IMR-90 (cell line): ENCODE measurements at regions of chr12 and their contacts with region 1.

Region 1: DNA sequence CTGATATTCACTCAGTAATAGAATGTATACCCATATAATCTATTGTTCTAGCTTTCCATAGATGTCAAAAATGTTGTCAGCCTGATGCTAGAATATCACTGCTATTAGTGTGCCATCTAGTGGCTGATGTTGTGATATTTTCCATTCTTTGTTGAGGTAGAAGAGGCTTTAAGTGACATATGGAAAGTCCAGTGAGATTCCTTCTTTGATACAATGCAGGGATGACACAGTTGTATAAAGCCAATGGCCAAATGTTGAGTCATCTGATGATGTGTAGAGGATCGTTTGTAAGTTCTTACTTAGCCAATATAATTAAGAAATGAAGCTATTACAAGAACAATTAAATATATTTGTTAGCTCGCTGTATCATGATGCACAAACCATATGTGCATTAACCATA is 58.1 kb upstream of the PCED1B start:
- DNase-seq: peak; percentile 95
- ATAC-seq: peak; percentile 76
- H3K4me3 ChIP-seq: no peak overlapping the region
- H3K27ac ChIP-seq: no peak overlapping the region
- H3K4me1 ChIP-seq: peaks cover 10% of the 10 kb centered on the region
- H3K27me3 ChIP-seq: no peaks in the 10 kb centered on the region
- CTCF ChIP-seq: peak; percentile 73
- POLR2A ChIP-seq: peak; percentile 20; the same call in 1 of the 2 replicates
- RAD21 ChIP-seq: peak; percentile 84

Region 2: GRCh38 chr12:46071769-46072624 is 949.3 kb before region 1 on chr12:
- CTCF ChIA-PET with region 1: no interaction called
- POLR2A ChIA-PET with region 1: no interaction called
- dilution Hi-C with region 1: no loop called
- in situ Hi-C with region 1: no loop called
- intact Hi-C with region 1: loop called (anchors 1 kb)
- DNase-seq: peak; percentile 71
- ATAC-seq: peak; percentile 95
- H3K4me3 ChIP-seq: no peak overlapping the region
- H3K27ac ChIP-seq: no peak overlapping the region
- H3K4me1 ChIP-seq: peaks cover 2% of the 10 kb centered on the region; the same call in 1 of the 2 replicates
- H3K27me3 ChIP-seq: peaks cover 5% of the 10 kb centered on the region
- CTCF ChIP-seq: peak; percentile 96
- POLR2A ChIP-seq: no peak
- RAD21 ChIP-seq: peak; percentile 92

Region 3: DNA sequence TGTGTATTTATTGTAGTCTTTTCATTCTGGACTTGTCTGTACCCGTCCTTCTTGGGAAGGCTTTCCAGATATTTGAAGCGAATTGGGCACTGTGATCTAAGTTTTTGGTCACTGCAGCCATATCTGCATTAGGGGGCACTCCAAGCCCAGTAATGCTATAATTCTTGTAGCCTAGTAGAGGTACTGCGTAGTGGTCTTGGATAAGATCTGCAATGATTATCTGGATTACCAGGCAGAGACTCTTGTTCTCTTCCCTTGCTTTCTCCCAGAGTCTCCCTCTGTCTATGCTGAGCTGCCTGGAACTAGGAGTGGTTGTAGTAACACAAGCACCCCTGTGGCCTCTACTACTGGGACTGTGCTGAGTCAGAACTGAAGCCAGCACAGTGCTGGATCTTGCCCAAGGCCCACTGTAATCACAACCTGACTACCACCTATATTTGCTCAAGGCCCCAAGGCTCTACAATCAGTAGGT is 678.7 kb before region 1 on chr12:
- CTCF ChIA-PET with region 1: no interaction called
- POLR2A ChIA-PET with region 1: no interaction called
- dilution Hi-C with region 1: no loop called
- in situ Hi-C with region 1: no loop called
- intact Hi-C with region 1: loop called (anchors 1 kb)
- DNase-seq: peak; percentile 63
- ATAC-seq: peak; percentile 91
- H3K4me3 ChIP-seq: no peak overlapping the region
- H3K27ac ChIP-seq: no peak overlapping the region
- H3K4me1 ChIP-seq: peaks cover 3% of the 10 kb centered on the region; the same call in 1 of the 2 replicates
- H3K27me3 ChIP-seq: no peaks in the 10 kb centered on the region
- CTCF ChIP-seq: peak; percentile 53
- POLR2A ChIP-seq: no peak
- RAD21 ChIP-seq: peak; percentile 63

Region 4: GRCh38 chr12:46556105-46556559 is 465.2 kb before region 1 on chr12:
- CTCF ChIA-PET with region 1: no interaction called
- POLR2A ChIA-PET with region 1: no interaction called
- dilution Hi-C with region 1: no loop called
- in situ Hi-C with region 1: no loop called
- intact Hi-C with region 1: loop called (anchors 1 kb)
- DNase-seq: peak; percentile 99
- ATAC-seq: peak; percentile 73
- H3K4me3 ChIP-seq: peak overlapping the region; percentile 10; the same call in 1 of the 2 replicates
- H3K27ac ChIP-seq: peak overlapping the region; percentile 97; the same call in 1 of the 2 replicates
- H3K4me1 ChIP-seq: peaks cover 15% of the 10 kb centered on the region
- H3K27me3 ChIP-seq: no peaks in the 10 kb centered on the region
- CTCF ChIP-seq: no peak
- POLR2A ChIP-seq: no peak
- RAD21 ChIP-seq: peak; percentile 26; the same call in 1 of the 2 replicates

Region 5: GRCh38 chr12:46675736-46676135 is 345.6 kb before region 1 on chr12:
- CTCF ChIA-PET with region 1: interaction called, 3 read pairs
- POLR2A ChIA-PET with region 1: no interaction called
- dilution Hi-C with region 1: no loop called
- in situ Hi-C with region 1: loop called (anchors 5 kb)
- intact Hi-C with region 1: no loop called
- DNase-seq: peak; percentile 44
- ATAC-seq: peak; percentile 60
- H3K4me3 ChIP-seq: no peak overlapping the region
- H3K27ac ChIP-seq: peak overlapping the region; percentile 15; the same call in 1 of the 2 replicates
- H3K4me1 ChIP-seq: peaks cover 3% of the 10 kb centered on the region
- H3K27me3 ChIP-seq: no peaks in the 10 kb centered on the region
- CTCF ChIP-seq: peak; percentile 64
- POLR2A ChIP-seq: no peak
- RAD21 ChIP-seq: peak; percentile 64

Region 6: GRCh38 chr12:47156167-47156736 is 135.0 kb after region 1 on chr12:
- CTCF ChIA-PET with region 1: no interaction called
- POLR2A ChIA-PET with region 1: no interaction called
- dilution Hi-C with region 1: no loop called
- in situ Hi-C with region 1: no loop called
- intact Hi-C with region 1: no loop called
- DNase-seq: peak; percentile 52
- ATAC-seq: peak; percentile 51
- H3K4me3 ChIP-seq: no peak overlapping the region
- H3K27ac ChIP-seq: peak overlapping the region; percentile 65; the same call in 1 of the 2 replicates
- H3K4me1 ChIP-seq: peaks cover 8% of the 10 kb centered on the region
- H3K27me3 ChIP-seq: no peaks in the 10 kb centered on the region
- CTCF ChIP-seq: no peak
- POLR2A ChIP-seq: no peak
- RAD21 ChIP-seq: no peak

Region 7: DNA sequence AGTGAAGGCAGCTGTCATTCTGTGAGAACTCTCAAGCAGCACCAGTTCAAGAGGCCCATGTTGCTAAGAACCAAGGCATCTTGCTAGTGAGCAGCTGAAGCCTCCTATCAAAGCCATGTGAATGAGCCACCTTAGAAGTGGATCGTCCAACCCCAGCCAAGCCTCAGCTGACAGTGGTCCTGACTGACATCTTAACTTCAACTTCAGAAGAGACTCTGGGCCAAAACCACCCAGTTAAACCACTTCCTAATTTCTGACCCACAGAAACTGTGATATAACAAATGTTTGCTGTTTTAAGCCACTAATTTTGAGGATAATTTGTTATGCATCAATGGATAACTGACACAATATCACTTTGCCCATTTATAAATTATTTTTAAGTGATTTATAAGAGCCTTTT is 428.5 kb after region 1 on chr12:
- CTCF ChIA-PET with region 1: no interaction called
- POLR2A ChIA-PET with region 1: no interaction called
- dilution Hi-C with region 1: no loop called
- in situ Hi-C with region 1: no loop called
- intact Hi-C with region 1: no loop called
- DNase-seq: no peak
- ATAC-seq: no peak
- H3K4me3 ChIP-seq: no peak overlapping the region
- H3K27ac ChIP-seq: no peak overlapping the region
- H3K4me1 ChIP-seq: no peaks in the 10 kb centered on the region
- H3K27me3 ChIP-seq: peaks cover 11% of the 10 kb centered on the region
- CTCF ChIP-seq: no peak
- POLR2A ChIP-seq: no peak
- RAD21 ChIP-seq: no peak

Region 8: GRCh38 chr12:47741340-47741703 is 720.0 kb after region 1 on chr12:
- CTCF ChIA-PET with region 1: no interaction called
- POLR2A ChIA-PET with region 1: no interaction called
- dilution Hi-C with region 1: no loop called
- in situ Hi-C with region 1: no loop called
- intact Hi-C with region 1: no loop called
- DNase-seq: no peak
- ATAC-seq: no peak
- H3K4me3 ChIP-seq: no peak overlapping the region
- H3K27ac ChIP-seq: no peak overlapping the region
- H3K4me1 ChIP-seq: peaks cover 16% of the 10 kb centered on the region
- H3K27me3 ChIP-seq: peaks cover 26% of the 10 kb centered on the region
- CTCF ChIP-seq: no peak
- POLR2A ChIP-seq: no peak
- RAD21 ChIP-seq: no peak